Dendritic cell treated with granulocyte-macrophage colony-stimulating factor and Interleukin-4, amounts not matched to agents 40 ng/mL and 50 ng/mL, for 4 days (primary cell): ENCODE measurements at regions of chr4 and their contacts with region 1.

Region 1: DNA sequence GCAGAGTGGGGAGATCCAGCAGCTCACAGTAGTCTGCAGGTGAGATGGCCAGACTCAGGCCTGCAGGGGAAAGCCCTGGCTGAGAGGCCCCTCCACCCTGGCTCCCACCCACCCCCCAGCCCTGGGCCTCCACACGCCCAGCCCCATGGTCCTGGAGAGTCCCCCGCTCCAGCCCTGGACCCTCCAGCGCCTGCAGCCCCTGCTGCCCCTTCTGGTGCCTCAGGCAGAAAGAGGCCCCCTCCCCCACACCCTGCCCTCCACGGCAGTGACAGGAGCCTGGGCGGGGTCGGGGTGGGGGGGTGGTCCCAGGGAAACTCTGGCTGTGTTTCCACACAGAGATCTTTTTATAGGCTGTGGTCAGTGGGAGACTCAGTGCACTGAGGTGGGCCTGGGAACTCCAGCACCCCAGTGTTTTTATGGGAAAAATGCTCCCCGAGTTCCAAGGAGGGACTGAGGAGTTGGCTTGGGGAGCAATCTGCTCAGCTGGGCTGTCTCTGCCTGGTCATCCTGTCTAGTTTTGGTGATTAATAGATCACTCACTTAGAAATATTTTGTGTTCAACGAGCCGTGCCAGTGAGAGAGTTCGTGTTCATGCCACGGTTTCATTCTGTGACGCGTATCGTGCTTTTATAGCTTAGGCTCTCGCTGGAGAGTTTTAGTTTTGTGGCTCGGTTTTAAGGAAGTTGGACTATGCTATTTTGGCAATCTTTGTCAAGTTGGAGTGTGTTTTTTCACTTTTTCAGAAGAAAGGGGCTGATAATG is 53.1 kb upstream of the HGFAC start:
- H3K4me3 Mint-ChIP-seq: peak overlapping the region; percentile 63
- H3K27ac Mint-ChIP-seq: peak overlapping the region; percentile 98
- H3K4me1 Mint-ChIP-seq: peaks cover 86% of the 10 kb centered on the region
- H3K27me3 Mint-ChIP-seq: no peaks in the 10 kb centered on the region

Region 2: GRCh38 chr4:3346146-3346545 is 42.5 kb before region 1 on chr4:
- intact Hi-C with region 1: loop called (anchors 1 kb)
- H3K4me3 Mint-ChIP-seq: no peak overlapping the region
- H3K27ac Mint-ChIP-seq: no peak overlapping the region
- H3K4me1 Mint-ChIP-seq: peaks cover 22% of the 10 kb centered on the region
- H3K27me3 Mint-ChIP-seq: peaks cover 3% of the 10 kb centered on the region

Region 3: GRCh38 chr4:3369781-3370674 is 18.6 kb before region 1 on chr4:
- intact Hi-C with region 1: loop called (anchors 1 kb)
- H3K4me3 Mint-ChIP-seq: peak overlapping the region; percentile 53
- H3K27ac Mint-ChIP-seq: peak overlapping the region; percentile 75
- H3K4me1 Mint-ChIP-seq: peaks cover 78% of the 10 kb centered on the region
- H3K27me3 Mint-ChIP-seq: peaks cover 49% of the 10 kb centered on the region

Region 4: GRCh38 chr4:3414028-3414780 is 25.6 kb after region 1 on chr4:
- intact Hi-C with region 1: loop called (anchors 2 kb)
- H3K4me3 Mint-ChIP-seq: peak overlapping the region; percentile 59
- H3K27ac Mint-ChIP-seq: peak overlapping the region; percentile 89
- H3K4me1 Mint-ChIP-seq: peaks cover 34% of the 10 kb centered on the region
- H3K27me3 Mint-ChIP-seq: peaks cover 5% of the 10 kb centered on the region

Region 5: DNA sequence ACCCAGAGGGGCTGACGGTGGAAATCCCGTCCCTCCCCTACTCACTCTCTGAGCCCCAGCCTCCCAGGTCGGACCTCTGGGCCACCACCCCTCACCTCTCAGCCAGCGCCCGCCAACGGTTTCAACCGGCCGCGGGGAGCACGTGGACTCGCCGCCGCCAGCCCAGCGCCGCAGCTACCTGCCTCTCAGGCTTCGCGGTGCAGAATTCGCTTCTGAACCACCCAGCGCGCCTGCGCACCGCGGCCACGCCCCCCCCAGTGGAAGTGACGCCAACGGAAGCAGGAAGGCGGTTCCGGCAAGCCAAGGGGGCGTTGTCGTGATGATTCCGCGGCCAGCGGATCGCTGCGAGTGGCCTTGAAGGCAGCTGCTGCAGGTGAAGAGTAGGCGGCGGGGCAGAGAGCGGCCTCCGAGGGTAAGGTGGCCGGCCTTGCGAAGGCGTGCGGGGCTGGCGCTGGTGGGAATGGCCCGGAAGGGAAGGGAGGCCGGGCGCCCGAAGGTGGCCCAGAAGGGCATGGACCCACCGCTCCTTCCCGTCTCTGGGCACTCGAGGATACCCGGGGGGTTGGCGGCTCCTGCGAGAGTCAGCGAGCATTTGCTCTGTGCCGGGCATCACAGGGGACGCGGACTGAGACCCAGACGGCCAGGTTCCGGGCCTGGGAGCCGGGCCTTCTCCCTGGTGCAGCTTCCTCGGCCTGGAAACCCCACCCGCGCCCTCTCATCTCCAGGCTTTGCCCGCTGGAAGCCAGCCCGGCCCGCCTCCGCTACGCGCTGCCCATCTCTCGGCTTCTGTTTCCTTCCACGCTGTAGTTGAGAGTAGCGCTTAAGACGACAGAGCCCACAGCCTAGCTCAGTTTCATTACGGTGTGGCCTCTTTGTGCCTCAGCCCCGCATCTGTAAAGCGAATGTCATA is 901.5 kb after region 1 on chr4 and contains the starts of genes LYAR and ZBTB49:
- intact Hi-C with region 1: no loop called
- H3K4me3 Mint-ChIP-seq: peak within 1 kb of the TSS; percentile 94
- H3K27ac Mint-ChIP-seq: peak within 1 kb of the TSS; percentile 87
- H3K4me1 Mint-ChIP-seq: peaks cover 47% of the 10 kb centered on the region
- H3K27me3 Mint-ChIP-seq: no peaks in the 10 kb centered on the region